ENCODE measurements at regions of chr4 and their contacts with region 1.

Region 1: GRCh38 chr4:10461091-10461849 is 4.0 kb upstream of the ZNF518B start:
- DNase-seq: no peak
- H3K4me3 ChIP-seq: peak overlapping the region in 3 of 4 donors; percentile 20 to 34 (median 34)
- H3K27ac ChIP-seq: no peak overlapping the region
- H3K4me1 ChIP-seq: peaks cover 0 to 18% (median 14%) of the 10 kb centered on the region in 4 donors
- H3K27me3 ChIP-seq: peaks cover 10 to 45% (median 27%) of the 10 kb centered on the region in 3 donors
- CTCF ChIP-seq: peak; percentile 11 to 90 (median 47)
- EP300 ChIP-seq: no peak
- POLR2A ChIP-seq: no peak

Region 2: GRCh38 chr4:9898596-9899305 is 562.5 kb before region 1 on chr4:
- intact Hi-C with region 1: no loop called
- DNase-seq: no peak
- H3K4me3 ChIP-seq: no peak overlapping the region
- H3K27ac ChIP-seq: no peak overlapping the region
- H3K4me1 ChIP-seq: peaks cover 0 to 7% (median 0%) of the 10 kb centered on the region in 4 donors
- H3K27me3 ChIP-seq: no peaks in the 10 kb centered on the region
- CTCF ChIP-seq: no peak
- EP300 ChIP-seq: no peak
- POLR2A ChIP-seq: no peak

Region 3: DNA sequence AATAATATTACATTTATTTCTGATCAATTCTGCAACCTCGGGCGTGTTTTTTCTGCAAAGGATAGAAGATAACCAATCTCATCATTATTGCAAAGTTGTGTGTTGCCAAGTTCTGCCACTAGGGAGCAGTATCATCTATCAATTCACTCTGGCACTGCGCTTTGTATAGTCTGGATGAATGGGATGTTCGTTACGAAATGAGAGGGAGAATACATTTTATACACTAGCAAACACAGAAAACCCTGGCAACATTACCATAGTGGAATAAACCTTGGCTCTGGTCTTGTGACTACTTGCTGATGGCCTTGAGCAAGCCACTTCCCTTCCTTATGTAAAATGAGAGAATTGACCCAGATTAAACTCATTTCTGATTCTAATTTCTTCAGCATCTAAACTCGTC is 93.4 kb after region 1 on chr4:
- intact Hi-C with region 1: loop called (anchors 5 kb)
- DNase-seq: no peak
- H3K4me3 ChIP-seq: no peak overlapping the region
- H3K27ac ChIP-seq: no peak overlapping the region
- H3K4me1 ChIP-seq: peaks cover 0 to 4% (median 2%) of the 10 kb centered on the region in 4 donors
- H3K27me3 ChIP-seq: no peaks in the 10 kb centered on the region
- CTCF ChIP-seq: peak; percentile 31 to 77 (median 58)
- EP300 ChIP-seq: no peak
- POLR2A ChIP-seq: no peak

Region 4: GRCh38 chr4:11130195-11130970 is 669.1 kb after region 1 on chr4:
- intact Hi-C with region 1: no loop called
- DNase-seq: no peak
- H3K4me3 ChIP-seq: no peak overlapping the region
- H3K27ac ChIP-seq: no peak overlapping the region
- H3K4me1 ChIP-seq: no peaks in the 10 kb centered on the region
- H3K27me3 ChIP-seq: no peaks in the 10 kb centered on the region
- CTCF ChIP-seq: no peak
- EP300 ChIP-seq: no peak
- POLR2A ChIP-seq: no peak